T-cell (primary cell): ENCODE measurements at regions of chr12 and their contacts with region 1.

Region 1: DNA sequence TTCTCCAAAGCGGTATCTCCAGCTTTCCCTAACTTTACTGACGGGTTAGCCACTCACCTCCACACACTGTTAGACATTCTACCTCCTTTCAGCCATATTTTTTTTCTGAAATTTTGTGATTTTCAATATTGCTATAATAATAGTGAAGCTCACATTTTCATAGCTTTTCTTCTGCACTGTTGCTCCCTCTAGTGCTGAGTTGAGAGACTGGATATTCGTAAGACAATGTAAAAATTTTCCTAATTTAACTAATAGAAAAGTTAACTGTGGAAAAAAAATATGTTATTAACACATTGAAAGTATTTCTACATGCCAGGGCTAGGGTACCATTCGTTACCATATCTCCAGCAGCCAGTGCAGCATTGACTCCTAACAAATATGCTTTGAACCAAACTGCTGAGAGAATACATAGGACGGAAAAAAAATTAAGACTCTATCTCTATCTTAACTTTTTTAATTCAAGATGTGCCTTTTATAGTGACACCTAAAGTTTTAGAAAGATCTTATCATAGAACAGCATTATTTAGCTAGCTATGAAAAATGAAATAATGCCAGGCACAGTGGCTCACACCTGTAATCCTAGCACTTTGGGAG is 48.7 kb upstream of the ABCC9 start:
- DNase-seq: peak in 1 of 35 experiments; percentile 9
- ATAC-seq: no peak
- H3K4me3 ChIP-seq: no peak overlapping the region
- H3K4me3 Mint-ChIP-seq: no peak overlapping the region
- H3K27ac ChIP-seq: no peak overlapping the region
- H3K27ac Mint-ChIP-seq: no peak overlapping the region
- H3K4me1 ChIP-seq: no peaks in the 10 kb centered on the region
- H3K4me1 Mint-ChIP-seq: peaks cover 7 to 10% (median 9%) of the 10 kb centered on the region in 3 donors
- H3K27me3 ChIP-seq: no peaks in the 10 kb centered on the region
- H3K27me3 Mint-ChIP-seq: peaks cover 6 to 12% of the 10 kb centered on the region in 2 donors

Region 2: DNA sequence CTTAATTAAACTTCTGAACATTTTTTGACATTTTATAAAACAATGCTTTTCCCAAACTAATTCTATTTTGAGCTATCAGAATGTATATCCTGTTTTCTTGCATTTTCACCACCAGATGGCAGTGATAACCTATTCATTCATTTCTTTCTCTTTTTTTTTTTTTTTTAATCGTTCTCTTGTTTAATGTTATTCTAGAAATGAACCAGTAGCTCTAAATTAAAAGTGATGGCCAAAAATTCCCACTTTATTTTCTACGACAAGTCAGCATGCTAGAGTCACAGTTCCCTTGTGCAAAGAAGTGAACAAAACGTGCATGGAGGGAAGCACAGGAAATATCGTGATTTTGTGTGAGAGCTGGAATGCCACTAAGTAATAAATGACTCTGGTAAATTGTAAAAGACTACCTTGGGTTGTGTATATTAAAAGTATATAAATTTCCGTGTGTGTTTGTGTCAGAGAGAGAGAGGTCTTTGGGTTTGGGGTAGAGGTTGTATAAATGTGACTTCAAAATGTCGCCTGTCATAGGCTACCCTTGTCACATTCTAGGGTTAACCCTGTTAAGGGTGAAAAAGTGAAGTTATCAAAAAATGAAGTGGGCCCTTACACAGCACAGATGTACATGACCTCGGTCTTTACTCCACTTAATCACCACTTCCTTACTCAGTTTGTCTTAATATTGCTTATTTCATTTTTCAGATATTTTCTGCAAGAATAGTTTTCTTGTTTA is 291.8 kb before region 1 on chr12:
- CTCF ChIA-PET with region 1: interaction called, 6 to 22 read pairs
- POLR2A ChIA-PET with region 1: no interaction called
- DNase-seq: peak in 1 of 35 experiments; percentile 68
- ATAC-seq: no peak
- H3K4me3 ChIP-seq: no peak overlapping the region
- H3K4me3 Mint-ChIP-seq: no peak overlapping the region
- H3K27ac ChIP-seq: no peak overlapping the region
- H3K27ac Mint-ChIP-seq: no peak overlapping the region
- H3K4me1 ChIP-seq: peaks cover 0 to 2% of the 10 kb centered on the region in 2 experiments
- H3K4me1 Mint-ChIP-seq: peaks cover 7 to 14% (median 13%) of the 10 kb centered on the region in 3 donors
- H3K27me3 ChIP-seq: no peaks in the 10 kb centered on the region
- H3K27me3 Mint-ChIP-seq: peaks cover 0 to 3% of the 10 kb centered on the region in 2 donors

Region 3: DNA sequence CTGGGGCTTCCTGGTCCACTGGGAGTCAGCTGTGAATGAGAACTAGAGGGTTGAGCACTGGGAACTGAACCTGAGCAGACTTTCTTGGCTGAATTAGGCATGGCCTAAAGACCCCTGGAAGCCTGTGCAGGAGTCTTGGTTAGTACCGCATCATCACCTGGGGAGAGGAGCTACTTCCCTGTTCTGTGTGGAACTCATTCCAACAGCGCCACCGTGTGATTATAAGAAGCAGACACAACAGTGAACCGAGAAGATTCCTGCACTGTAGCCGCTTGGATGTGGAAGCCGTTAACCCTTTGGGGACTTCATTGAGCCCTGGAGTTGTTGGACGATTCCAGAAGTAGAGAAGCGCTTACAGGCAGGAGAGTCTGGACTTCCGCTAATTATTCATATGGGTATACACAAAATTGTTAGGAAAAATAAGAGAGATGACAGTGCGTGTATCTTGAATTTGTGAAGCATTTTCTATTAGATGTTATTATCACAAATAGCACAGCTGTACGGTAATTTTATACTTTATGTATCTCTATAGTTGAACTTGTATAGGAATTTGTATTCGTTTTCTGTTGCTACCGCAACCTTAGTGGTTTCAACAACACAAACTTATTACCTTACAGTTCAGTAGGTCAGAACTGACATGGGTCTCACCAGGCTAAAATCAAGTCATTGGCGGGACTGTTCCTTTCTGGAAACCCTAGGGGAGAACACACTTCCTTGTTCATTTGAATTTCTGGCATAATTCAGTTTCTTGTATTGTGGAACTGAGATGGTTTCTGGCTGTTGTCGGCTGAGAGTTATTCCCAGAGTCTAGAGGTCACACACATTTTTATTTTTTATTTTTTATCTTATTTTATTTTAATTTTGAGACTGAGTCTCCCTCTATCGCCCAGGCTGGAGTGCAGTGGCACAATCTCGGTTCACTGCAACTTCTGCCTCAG is 453.7 kb after region 1 on chr12:
- CTCF ChIA-PET with region 1: no interaction called
- POLR2A ChIA-PET with region 1: no interaction called
- DNase-seq: peak; percentile 9 to 88 (median 50)
- ATAC-seq: peak; percentile 86 to 100 (median 96)
- H3K4me3 ChIP-seq: no peak overlapping the region
- H3K4me3 Mint-ChIP-seq: no peak overlapping the region
- H3K27ac ChIP-seq: no peak overlapping the region
- H3K27ac Mint-ChIP-seq: no peak overlapping the region
- H3K4me1 ChIP-seq: peaks cover 0 to 5% of the 10 kb centered on the region in 2 experiments
- H3K4me1 Mint-ChIP-seq: peaks cover 0 to 9% (median 5%) of the 10 kb centered on the region in 3 donors
- H3K27me3 ChIP-seq: no peaks in the 10 kb centered on the region
- H3K27me3 Mint-ChIP-seq: no peaks in the 10 kb centered on the region